Calu3 (cell line): ENCODE measurements at regions of chr4 and their contacts with region 1.

Region 1: DNA sequence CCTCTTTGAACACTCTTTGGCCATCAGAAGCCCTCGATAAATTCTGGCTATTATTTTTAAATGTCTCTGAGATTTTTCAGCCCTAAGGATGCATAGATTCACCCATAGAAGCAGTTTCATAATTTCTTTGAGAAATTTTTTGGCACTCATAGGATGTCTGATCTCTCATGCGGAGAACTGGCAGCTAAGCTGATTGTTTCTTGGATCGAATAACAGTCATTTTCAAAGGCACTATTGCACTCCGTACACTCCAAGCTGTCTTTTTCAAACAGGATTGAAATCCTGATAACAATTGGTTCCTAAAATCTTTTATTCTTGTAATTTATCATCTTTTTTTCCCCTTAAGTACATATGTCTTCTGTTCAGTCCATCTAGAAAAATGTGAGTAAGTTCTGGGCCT is 411.9 kb downstream of the SPOCK3 start:
- DNase-seq: no peak
- H3K4me3 Mint-ChIP-seq: no peak overlapping the region
- H3K27ac Mint-ChIP-seq: no peak overlapping the region
- H3K4me1 Mint-ChIP-seq: no peaks in the 10 kb centered on the region
- H3K27me3 Mint-ChIP-seq: no peaks in the 10 kb centered on the region
- CTCF ChIP-seq: no peak

Region 2: GRCh38 chr4:166174717-166175490 is 647.5 kb before region 1 on chr4:
- CTCF ChIA-PET with region 1: interaction called, 11 read pairs
- intact Hi-C with region 1: no loop called
- DNase-seq: no peak
- H3K4me3 Mint-ChIP-seq: no peak overlapping the region
- H3K27ac Mint-ChIP-seq: no peak overlapping the region
- H3K4me1 Mint-ChIP-seq: peaks cover 5% of the 10 kb centered on the region
- H3K27me3 Mint-ChIP-seq: no peaks in the 10 kb centered on the region
- CTCF ChIP-seq: no peak

Region 3: GRCh38 chr4:166724369-166724768 is 98.0 kb before region 1 on chr4:
- CTCF ChIA-PET with region 1: no interaction called
- intact Hi-C with region 1: no loop called
- DNase-seq: peak; percentile 3
- H3K4me3 Mint-ChIP-seq: no peak overlapping the region
- H3K27ac Mint-ChIP-seq: no peak overlapping the region
- H3K4me1 Mint-ChIP-seq: peaks cover 9% of the 10 kb centered on the region
- H3K27me3 Mint-ChIP-seq: no peaks in the 10 kb centered on the region
- CTCF ChIP-seq: no peak

Region 4: GRCh38 chr4:166862032-166862431 is 39.6 kb after region 1 on chr4:
- CTCF ChIA-PET with region 1: no interaction called
- intact Hi-C with region 1: no loop called
- DNase-seq: no peak
- H3K4me3 Mint-ChIP-seq: no peak overlapping the region
- H3K27ac Mint-ChIP-seq: no peak overlapping the region
- H3K4me1 Mint-ChIP-seq: no peaks in the 10 kb centered on the region
- H3K27me3 Mint-ChIP-seq: no peaks in the 10 kb centered on the region
- CTCF ChIP-seq: no peak